ENCODE measurements at regions of chr12 and their contacts with region 1.

Region 1: GRCh38 chr12:94532490-94533422 is 73.1 kb upstream of the CEP83 start:
- DNase-seq: peak; percentile 83
- CTCF ChIP-seq: peak; percentile 81

Region 2: DNA sequence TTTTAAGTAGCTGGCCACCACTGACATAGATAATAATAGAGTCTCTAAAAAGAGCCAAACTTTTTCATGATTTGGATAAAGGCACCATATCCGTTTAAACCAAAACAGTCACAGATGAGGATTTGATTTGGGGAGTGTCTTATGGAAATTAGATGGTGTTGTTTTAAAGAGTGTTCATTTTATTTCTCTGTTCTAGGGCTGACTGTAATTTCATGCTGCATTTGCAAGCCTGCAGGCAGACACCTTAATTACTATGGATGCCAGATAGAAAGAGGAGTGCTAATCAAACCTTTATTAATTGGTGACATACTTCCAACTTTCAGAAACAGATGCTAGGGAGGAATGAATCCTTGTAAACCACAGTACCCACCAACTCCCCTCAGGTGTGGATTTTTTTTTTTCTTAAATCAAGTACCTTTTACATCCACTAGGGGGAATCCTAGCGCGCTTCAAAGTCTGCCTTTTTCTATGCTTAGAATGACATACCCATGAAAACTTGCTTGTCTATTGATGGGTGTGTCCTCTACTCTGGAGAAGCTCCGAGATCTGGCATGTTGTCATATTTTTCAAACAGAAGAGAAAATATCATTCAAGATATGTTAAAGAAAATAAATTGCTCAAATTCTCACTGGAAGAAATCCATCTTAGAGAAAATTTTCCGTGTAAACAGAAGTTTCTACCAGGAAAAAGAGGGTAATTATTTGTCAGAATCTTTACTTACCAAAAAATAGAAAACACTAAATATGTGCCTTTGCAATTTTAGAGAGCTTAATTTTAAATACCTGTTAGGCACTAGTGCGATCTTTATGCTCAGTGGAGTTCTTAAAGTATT is 398.6 kb before region 1 on chr12:
- CTCF ChIA-PET with region 1: interaction called, 18 read pairs
- POLR2A ChIA-PET with region 1: no interaction called
- DNase-seq: peak; percentile 52
- CTCF ChIP-seq: peak; percentile 60

Region 3: GRCh38 chr12:94498073-94498472 is 34.7 kb before region 1 on chr12:
- CTCF ChIA-PET with region 1: no interaction called
- POLR2A ChIA-PET with region 1: no interaction called
- DNase-seq: no peak
- CTCF ChIP-seq: no peak

Region 4: DNA sequence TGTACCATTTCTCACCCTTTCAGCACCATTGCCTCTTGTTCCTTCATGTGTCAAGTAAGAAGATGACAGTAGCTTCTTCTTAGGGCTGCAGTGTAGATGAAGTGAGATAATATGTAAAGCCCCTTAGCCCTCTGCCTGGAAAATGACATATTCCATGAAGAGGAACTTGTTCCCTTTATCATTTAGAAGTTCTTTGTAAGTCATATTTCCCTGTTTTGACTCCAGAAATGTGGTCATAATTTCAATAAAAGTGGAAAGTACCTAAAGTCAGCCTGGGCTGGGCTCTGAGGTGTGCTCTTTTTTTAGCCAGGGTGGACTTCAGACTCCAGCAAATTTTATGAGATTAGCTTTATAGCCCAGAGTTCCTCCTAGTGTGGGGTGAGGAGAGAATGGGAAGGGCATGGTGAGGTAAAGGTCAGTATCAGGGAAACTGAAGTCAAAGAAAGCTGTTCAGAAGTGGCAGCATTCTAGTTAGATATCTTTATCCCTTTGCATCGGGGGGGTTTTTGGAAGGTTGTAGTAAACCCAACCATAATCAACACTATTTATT is 25.1 kb after region 1 on chr12:
- CTCF ChIA-PET with region 1: no interaction called
- POLR2A ChIA-PET with region 1: no interaction called
- DNase-seq: no peak
- CTCF ChIP-seq: no peak

Region 5: DNA sequence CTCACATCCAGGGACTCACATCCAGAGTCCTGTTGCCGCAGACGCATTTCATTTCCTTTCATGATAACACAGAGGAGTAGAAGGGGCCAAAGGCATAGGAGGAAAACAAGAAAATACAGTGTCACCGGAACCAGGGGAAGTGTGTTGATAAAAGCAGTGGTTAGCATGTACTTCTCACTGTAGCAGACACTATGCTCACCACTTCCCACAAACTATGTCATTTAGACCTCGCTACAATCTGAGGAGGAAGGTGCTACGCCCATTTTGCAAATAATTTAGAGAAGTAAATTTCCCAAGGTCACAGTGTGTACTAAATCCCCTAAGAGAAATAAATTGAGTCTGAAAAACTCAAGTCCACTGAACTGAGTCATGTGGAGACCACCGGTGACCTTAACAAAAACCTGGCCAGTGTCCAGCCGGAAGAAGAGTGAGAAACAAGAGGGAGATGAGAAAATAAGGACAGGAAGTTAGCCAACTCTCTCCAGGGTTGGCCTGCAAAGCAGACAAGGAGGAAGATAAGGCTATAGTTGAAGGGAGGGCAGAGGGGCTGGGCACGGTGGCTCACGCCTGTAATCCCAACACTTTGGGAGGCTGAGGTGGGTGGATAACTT is 143.4 kb after region 1 on chr12:
- CTCF ChIA-PET with region 1: no interaction called
- POLR2A ChIA-PET with region 1: no interaction called
- DNase-seq: peak; percentile 68
- CTCF ChIP-seq: no peak

Measured in GM10248 (cell line).